ENCODE measurements at regions of chr10 and their contacts with region 1.

Region 1: DNA sequence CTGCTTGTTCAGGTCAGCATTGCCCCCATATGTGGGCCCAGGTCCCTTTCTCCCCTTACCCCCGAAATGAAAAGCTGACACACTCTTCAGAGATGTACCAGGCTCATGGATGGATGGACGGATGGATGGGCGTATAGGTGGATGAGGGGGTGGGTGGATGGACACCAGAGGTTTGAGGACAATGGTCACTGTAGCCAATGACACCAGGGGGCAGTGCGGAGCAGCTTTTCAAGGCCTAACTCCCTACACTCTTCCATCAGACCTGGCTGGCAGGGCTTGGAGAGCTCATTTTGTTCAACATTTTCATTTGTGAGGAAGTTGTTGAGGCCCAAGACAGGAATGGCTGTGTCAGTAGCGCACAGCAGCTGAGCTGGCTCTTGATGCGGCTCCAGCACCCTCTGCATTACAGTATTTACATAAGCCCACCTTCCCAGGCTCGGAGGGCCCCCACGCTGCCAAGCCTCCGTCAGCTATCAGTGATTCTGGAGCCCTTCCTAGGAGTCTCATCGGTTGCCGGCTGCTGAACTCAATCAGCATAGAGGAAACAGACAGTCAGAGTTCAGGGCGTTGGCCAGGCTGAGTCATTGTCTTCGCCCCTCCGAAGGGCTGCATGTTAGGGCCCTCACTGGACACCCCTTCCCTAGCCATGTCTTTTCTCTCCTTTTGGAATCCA is 11.6 kb upstream of the FFAR4 start:
- DNase-seq: peak; percentile 81
- H3K4me3 Mint-ChIP-seq: no peak overlapping the region
- H3K27ac Mint-ChIP-seq: no peak overlapping the region
- H3K4me1 Mint-ChIP-seq: no peaks in the 10 kb centered on the region
- H3K27me3 Mint-ChIP-seq: peaks cover 6% of the 10 kb centered on the region

Region 2: GRCh38 chr10:93445097-93445960 is 109.6 kb before region 1 on chr10:
- intact Hi-C with region 1: no loop called
- DNase-seq: no peak
- H3K4me3 Mint-ChIP-seq: no peak overlapping the region
- H3K27ac Mint-ChIP-seq: no peak overlapping the region
- H3K4me1 Mint-ChIP-seq: no peaks in the 10 kb centered on the region
- H3K27me3 Mint-ChIP-seq: no peaks in the 10 kb centered on the region

Region 3: DNA sequence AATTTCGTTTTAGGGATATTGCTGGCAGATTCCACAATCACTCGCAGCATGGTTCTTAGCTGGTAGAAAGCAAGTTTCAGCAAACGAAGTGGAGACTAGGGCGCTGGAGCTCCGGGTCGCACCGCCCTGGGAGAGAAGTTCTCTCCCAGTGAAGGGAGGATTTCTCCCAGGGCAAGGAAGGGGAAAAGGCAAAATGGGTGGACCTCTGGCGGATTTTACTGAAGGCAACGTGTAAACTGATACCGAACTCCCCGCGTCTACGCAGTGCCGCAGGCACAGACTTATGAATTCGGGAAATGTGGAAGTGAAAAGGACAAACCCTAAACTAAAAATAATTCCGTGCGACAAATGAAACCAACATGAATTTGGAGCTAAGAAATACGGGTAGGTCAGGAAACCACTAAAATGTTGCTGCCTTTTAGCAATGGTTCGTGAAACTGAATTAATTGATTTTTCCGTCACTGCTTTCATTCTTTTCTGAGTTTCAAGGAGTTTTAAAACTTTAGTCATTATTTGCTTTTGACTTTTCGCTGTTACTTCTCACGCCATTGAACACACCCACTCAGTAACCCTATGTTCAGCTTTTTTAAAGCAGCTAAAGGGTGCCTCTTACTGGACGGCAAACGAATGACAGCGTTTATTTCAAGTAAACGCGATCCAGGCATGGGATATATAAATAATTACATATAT is 72.6 kb before region 1 on chr10 and contains the start of gene MYOF:
- intact Hi-C with region 1: no loop called
- DNase-seq: peak; percentile 88
- H3K4me3 Mint-ChIP-seq: peak within 1 kb of the TSS; percentile 89
- H3K27ac Mint-ChIP-seq: peak within 1 kb of the TSS; percentile 89
- H3K4me1 Mint-ChIP-seq: peaks cover 23% of the 10 kb centered on the region
- H3K27me3 Mint-ChIP-seq: peaks cover 2% of the 10 kb centered on the region
- total RNA-seq, gene MYOF: 23.8 and 25.4 TPM in 2 replicates

Region 4: GRCh38 chr10:93672022-93672678 is 117.3 kb after region 1 on chr10:
- intact Hi-C with region 1: loop called (anchors 10 kb)
- DNase-seq: no peak
- H3K4me3 Mint-ChIP-seq: no peak overlapping the region
- H3K27ac Mint-ChIP-seq: no peak overlapping the region
- H3K4me1 Mint-ChIP-seq: peaks cover 3% of the 10 kb centered on the region
- H3K27me3 Mint-ChIP-seq: no peaks in the 10 kb centered on the region

Region 5: GRCh38 chr10:93859049-93859655 is 304.3 kb after region 1 on chr10:
- intact Hi-C with region 1: loop called (anchors 2 kb)
- DNase-seq: no peak
- H3K4me3 Mint-ChIP-seq: no peak overlapping the region
- H3K27ac Mint-ChIP-seq: no peak overlapping the region
- H3K4me1 Mint-ChIP-seq: no peaks in the 10 kb centered on the region
- H3K27me3 Mint-ChIP-seq: no peaks in the 10 kb centered on the region

Measured in activated CD4-positive, alpha-beta T cell treated with anti-CD3 and anti-CD28 coated beads, Interleukin-2, amount 10 ng/mL, durations not matched to agents 24 days and 14 days (primary cell).